Activated naive CD4-positive, alpha-beta T cell treated with anti-CD3 and anti-CD28 coated beads for 36 hours (primary cell): ENCODE measurements at regions of chr2 and their contacts with region 1.

Region 1: GRCh38 chr2:180006781-180007579 is at the start of gene CWC22:
- DNase-seq: peak; percentile 93
- H3K4me3 Mint-ChIP-seq: peak within 1 kb of the TSS; percentile 92
- H3K27ac Mint-ChIP-seq: peak within 1 kb of the TSS; percentile 100
- H3K4me1 Mint-ChIP-seq: peaks cover 36% of the 10 kb centered on the region
- H3K27me3 Mint-ChIP-seq: no peaks in the 10 kb centered on the region
- total RNA-seq, gene CWC22: 20.4 TPM

Region 2: GRCh38 chr2:179758636-179759035 is 248.3 kb before region 1 on chr2:
- CTCF ChIA-PET with region 1: no interaction called
- intact Hi-C with region 1: no loop called
- DNase-seq: no peak
- H3K4me3 Mint-ChIP-seq: no peak overlapping the region
- H3K27ac Mint-ChIP-seq: no peak overlapping the region
- H3K4me1 Mint-ChIP-seq: no peaks in the 10 kb centered on the region
- H3K27me3 Mint-ChIP-seq: peaks cover 8% of the 10 kb centered on the region

Region 3: DNA sequence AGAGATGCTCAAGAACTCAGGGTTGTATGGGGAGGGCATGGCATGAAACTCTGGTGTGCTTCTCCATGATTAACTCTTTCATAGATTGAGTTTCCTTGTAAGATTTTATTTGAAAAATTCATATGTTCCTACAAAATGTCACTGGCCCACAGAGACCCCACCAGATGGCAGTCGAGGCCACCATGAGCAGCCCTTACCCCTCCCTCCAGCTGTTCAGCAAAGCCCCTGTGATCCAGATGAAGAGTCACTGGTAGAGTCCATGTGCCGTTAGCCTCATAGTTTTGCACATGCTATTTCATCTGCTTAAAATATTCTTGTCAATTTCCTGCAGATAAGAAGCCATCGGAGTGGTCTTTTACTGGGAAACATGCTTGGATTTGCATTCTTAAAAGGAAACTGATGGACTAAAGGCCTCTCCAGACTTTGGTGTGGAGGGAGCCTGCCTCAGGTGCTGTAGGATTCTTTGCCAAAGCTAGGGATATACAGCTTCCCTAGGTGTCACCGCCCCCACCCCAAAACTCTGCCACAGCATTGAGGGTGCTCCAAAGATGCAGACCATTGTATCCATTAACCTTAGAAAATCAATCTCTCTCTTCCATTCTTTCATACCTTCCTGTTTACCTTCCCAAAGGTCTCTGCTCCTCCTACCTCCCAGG is 164.4 kb before region 1 on chr2:
- CTCF ChIA-PET with region 1: no interaction called
- intact Hi-C with region 1: no loop called
- DNase-seq: peak; percentile 19
- H3K4me3 Mint-ChIP-seq: no peak overlapping the region
- H3K27ac Mint-ChIP-seq: no peak overlapping the region
- H3K4me1 Mint-ChIP-seq: no peaks in the 10 kb centered on the region
- H3K27me3 Mint-ChIP-seq: no peaks in the 10 kb centered on the region

Region 4: GRCh38 chr2:181036848-181037603 is 1030.0 kb after region 1 on chr2:
- CTCF ChIA-PET with region 1: no interaction called
- intact Hi-C with region 1: loop called (anchors 10 kb)
- DNase-seq: peak; percentile 27
- H3K4me3 Mint-ChIP-seq: no peak overlapping the region
- H3K27ac Mint-ChIP-seq: no peak overlapping the region
- H3K4me1 Mint-ChIP-seq: peaks cover 9% of the 10 kb centered on the region
- H3K27me3 Mint-ChIP-seq: no peaks in the 10 kb centered on the region

Region 5: DNA sequence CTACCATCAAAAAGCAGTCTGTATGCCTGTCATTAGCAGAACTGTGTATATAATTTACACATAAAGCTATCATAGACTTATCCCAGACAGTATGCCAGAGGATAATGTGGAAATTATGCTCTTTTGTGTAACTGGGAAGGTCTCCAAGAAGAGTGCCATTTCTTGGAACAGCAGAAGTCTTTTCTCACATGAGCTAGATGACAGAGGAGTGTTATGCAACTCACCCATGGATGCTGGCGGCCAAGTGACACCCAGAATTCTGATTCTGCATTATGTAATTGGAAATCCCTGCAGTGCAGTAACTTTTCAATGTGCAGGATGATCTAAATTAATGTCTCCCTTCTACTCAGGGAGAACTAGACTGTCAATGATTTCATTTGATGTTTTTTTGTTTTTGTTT is 1133.4 kb after region 1 on chr2:
- CTCF ChIA-PET with region 1: no interaction called
- intact Hi-C with region 1: loop called (anchors 10 kb)
- DNase-seq: no peak
- H3K4me3 Mint-ChIP-seq: peak overlapping the region; percentile 68
- H3K27ac Mint-ChIP-seq: peak overlapping the region; percentile 65
- H3K4me1 Mint-ChIP-seq: peaks cover 63% of the 10 kb centered on the region
- H3K27me3 Mint-ChIP-seq: no peaks in the 10 kb centered on the region